Caco-2 (cell line): ENCODE measurements at regions of chr1 and their contacts with region 1.

Region 1: DNA sequence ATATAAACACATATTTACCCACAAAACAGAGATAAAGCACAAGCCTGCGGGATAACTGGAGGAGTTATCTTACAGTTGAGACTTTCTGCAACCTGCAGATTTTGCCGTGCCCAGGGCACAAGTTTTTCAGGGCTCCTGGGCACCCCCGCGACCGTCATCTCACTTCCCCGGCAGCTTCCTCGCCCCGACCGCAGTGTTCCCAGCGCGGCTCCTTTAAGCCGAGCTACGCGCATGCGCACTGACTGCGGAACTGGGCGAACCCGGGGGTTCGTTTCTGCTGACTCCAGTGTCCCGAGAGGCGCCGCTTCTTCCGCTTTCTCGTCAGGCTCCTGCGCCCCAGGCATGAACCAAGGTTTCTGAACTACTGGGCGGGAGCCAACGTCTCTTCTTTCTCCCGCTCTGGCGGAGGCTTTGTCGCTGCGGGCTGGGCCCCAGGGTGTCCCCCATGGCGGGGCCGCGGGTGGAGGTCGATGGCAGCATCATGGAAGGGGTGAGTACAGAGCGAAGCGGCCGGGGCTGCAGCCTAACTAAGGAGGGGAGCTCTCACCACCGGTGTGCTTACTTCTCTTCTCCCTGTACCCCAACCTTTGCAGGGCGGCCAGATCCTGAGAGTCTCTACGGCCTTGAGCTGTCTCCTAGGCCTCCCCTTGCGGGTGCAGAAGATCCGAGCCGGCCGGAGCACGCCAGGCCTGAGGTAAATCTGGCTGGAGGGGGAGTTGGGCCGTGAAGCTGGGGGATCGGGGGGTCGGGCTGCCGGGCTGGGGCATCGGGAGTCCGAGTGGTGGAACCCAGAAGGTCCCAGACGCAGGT is at the start of gene RTCA:
- DNase-seq: peak; percentile 88 to 89
- H3K4me3 ChIP-seq: peak within 1 kb of the TSS; percentile 79
- H3K4me3 Mint-ChIP-seq: peak within 1 kb of the TSS; percentile 95
- H3K27ac Mint-ChIP-seq: peak within 1 kb of the TSS; percentile 96
- H3K4me1 ChIP-seq: peaks cover 4% of the 10 kb centered on the region
- H3K4me1 Mint-ChIP-seq: no peaks in the 10 kb centered on the region
- H3K27me3 ChIP-seq: no peaks in the 10 kb centered on the region
- H3K27me3 Mint-ChIP-seq: no peaks in the 10 kb centered on the region
- CTCF ChIP-seq: no peak
- total RNA-seq, gene RTCA: 27.4 and 31.4 TPM in 2 replicates

Region 2: GRCh38 chr1:100249537-100250257 is 16.4 kb before region 1 on chr1 and contains the start of gene DBT:
- CTCF ChIA-PET with region 1: no interaction called
- POLR2A ChIA-PET with region 1: interaction called, 15 read pairs
- intact Hi-C with region 1: loop called (anchors 2 kb)
- DNase-seq: peak; percentile 89 to 90
- H3K4me3 ChIP-seq: peak within 1 kb of the TSS; percentile 48
- H3K4me3 Mint-ChIP-seq: no peak within 1 kb of the TSS
- H3K27ac Mint-ChIP-seq: no peak within 1 kb of the TSS
- H3K4me1 ChIP-seq: peaks cover 12% of the 10 kb centered on the region; the same call in 1 of the 2 replicates
- H3K4me1 Mint-ChIP-seq: peaks cover 14% of the 10 kb centered on the region
- H3K27me3 ChIP-seq: no peaks in the 10 kb centered on the region
- H3K27me3 Mint-ChIP-seq: no peaks in the 10 kb centered on the region
- CTCF ChIP-seq: no peak
- total RNA-seq, gene DBT: 13.3 and 14.1 TPM in 2 replicates